ENCODE measurements at regions of chr19 and their contacts with region 1.

Region 1: GRCh38 chr19:55080968-55081772 is 5.5 kb downstream of the EPS8L1 start:
- DNase-seq: peak; percentile 96
- H3K4me3 Mint-ChIP-seq: peak overlapping the region; percentile 72
- H3K27ac Mint-ChIP-seq: no peak overlapping the region
- H3K4me1 Mint-ChIP-seq: peaks cover 23% of the 10 kb centered on the region
- H3K27me3 Mint-ChIP-seq: peaks cover 57% of the 10 kb centered on the region

Region 2: DNA sequence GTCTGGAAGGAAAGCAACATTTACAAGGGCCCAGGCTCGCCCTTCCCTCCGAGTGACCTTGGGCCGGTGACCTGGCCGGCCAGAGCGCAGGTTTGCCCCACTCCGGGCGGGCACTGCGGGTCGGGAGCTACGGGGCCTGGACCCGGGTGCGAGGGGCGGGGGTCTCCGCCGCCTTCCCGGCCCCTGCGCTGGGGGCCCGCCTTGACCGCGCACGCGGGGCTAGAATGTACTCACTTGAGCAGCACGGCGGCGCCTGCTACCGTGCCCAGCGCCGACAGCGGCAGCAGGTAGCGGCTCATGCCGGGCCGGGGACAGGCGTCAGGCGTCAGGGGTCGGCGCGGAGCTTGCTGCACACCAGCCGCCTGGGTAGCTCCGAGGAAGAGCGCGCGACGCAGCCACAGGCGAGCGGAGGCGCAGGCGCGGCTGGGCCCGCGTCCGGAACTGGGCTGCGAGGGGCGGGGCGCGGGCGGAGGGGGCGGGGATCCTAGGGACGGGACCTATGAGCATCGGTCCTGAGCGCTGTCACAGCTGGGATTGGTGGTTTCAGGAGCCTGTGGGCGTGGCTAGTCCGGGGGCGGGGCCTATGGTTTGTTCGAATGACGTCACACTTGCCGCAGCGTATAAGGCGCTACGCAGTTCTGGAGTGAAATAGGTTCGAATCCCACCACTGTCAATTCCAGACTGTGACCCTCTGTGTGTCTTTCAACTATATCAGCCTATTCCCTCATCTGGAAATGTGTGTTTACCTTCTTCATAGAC is 18.3 kb before region 1 on chr19 and contains the start of gene RDH13:
- CTCF ChIA-PET with region 1: interaction called, 3 read pairs
- POLR2A ChIA-PET with region 1: no interaction called
- intact Hi-C with region 1: loop called (anchors 1 kb)
- DNase-seq: peak; percentile 99
- H3K4me3 Mint-ChIP-seq: peak within 1 kb of the TSS; percentile 80
- H3K27ac Mint-ChIP-seq: no peak within 1 kb of the TSS
- H3K4me1 Mint-ChIP-seq: peaks cover 8% of the 10 kb centered on the region
- H3K27me3 Mint-ChIP-seq: peaks cover 12% of the 10 kb centered on the region
- total RNA-seq, gene RDH13: 11.0 to 12.8 TPM

Region 3: GRCh38 chr19:55117636-55118391 is 36.6 kb after region 1 on chr19 and contains the start of gene PPP1R12C:
- CTCF ChIA-PET with region 1: no interaction called
- POLR2A ChIA-PET with region 1: no interaction called
- intact Hi-C with region 1: loop called (anchors 2 kb)
- DNase-seq: peak; percentile 99
- H3K4me3 Mint-ChIP-seq: peak within 1 kb of the TSS; percentile 97
- H3K27ac Mint-ChIP-seq: peak within 1 kb of the TSS; percentile 89
- H3K4me1 Mint-ChIP-seq: peaks cover 30% of the 10 kb centered on the region
- H3K27me3 Mint-ChIP-seq: peaks cover under 1% of the 10 kb centered on the region
- total RNA-seq, gene PPP1R12C: 62.7 to 73.2 TPM

Measured in activated CD4-positive, alpha-beta memory T cell treated with anti-CD3 and anti-CD28 coated beads for 36 hours (primary cell).